ENCODE measurements at regions of chr9 and their contacts with region 1.

Region 1: GRCh38 chr9:137070201-137070905 is at the start of gene SAPCD2:
- DNase-seq: peak; percentile 90
- H3K4me3 Mint-ChIP-seq: peak within 1 kb of the TSS; percentile 72
- H3K27ac Mint-ChIP-seq: no peak within 1 kb of the TSS
- H3K4me1 Mint-ChIP-seq: peaks cover 11% of the 10 kb centered on the region
- H3K27me3 Mint-ChIP-seq: no peaks in the 10 kb centered on the region
- CTCF ChIP-seq: no peak
- total RNA-seq, gene SAPCD2: 5.7 and 15.7 TPM in 2 replicates

Region 2: DNA sequence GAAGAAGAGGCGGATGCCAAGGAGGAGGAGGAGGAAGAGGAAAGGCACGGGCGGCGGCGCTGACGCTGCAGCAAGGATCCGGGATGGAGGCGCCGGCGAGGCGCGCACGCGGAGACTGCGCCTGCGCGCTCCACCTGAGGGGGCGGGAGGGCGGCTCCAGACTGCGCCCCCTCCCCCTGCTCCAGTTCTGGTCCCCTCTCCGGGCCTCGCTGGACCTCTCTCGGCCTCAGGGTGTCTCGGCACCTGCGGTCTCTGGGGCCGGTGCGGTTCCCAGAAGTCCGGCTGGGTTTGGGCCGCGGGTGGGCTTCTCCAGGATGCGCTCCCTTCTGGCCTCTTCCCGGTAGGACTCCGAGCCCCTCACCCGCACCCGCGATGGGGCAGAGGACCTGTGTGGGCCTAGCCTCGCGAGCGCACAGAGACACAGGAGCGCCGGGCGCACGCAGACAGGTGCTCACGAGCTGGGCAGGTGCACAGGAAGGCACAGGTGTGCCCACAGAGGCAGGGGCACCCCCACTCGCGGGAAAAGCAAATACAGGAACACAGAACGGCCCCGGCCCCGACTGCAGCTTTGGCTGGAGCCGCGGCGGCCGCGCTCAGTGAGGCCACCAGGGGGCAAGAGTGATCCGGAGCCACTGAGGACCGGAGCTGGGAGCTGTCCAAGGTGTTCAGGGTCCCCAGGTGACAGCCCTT is 24.1 kb before region 1 on chr9 and contains the start of gene NPDC1:
- CTCF ChIA-PET with region 1: interaction called, 170 read pairs
- POLR2A ChIA-PET with region 1: interaction called, 19 read pairs
- intact Hi-C with region 1: no loop called
- DNase-seq: peak; percentile 82
- H3K4me3 Mint-ChIP-seq: peak within 1 kb of the TSS; percentile 74
- H3K27ac Mint-ChIP-seq: no peak within 1 kb of the TSS
- H3K4me1 Mint-ChIP-seq: no peaks in the 10 kb centered on the region
- H3K27me3 Mint-ChIP-seq: no peaks in the 10 kb centered on the region
- CTCF ChIP-seq: peak; percentile 87
- total RNA-seq, gene NPDC1: 161 and 171 TPM in 2 replicates

Region 3: GRCh38 chr9:137055385-137056364 is 14.7 kb before region 1 on chr9:
- CTCF ChIA-PET with region 1: interaction called, 27 read pairs
- POLR2A ChIA-PET with region 1: interaction called, 4 read pairs
- intact Hi-C with region 1: no loop called
- DNase-seq: peak; percentile 94
- H3K4me3 Mint-ChIP-seq: peak overlapping the region; percentile 49
- H3K27ac Mint-ChIP-seq: no peak overlapping the region
- H3K4me1 Mint-ChIP-seq: peaks cover 7% of the 10 kb centered on the region
- H3K27me3 Mint-ChIP-seq: no peaks in the 10 kb centered on the region
- CTCF ChIP-seq: no peak